Vagina (tissue), 2 donors: ENCODE measurements at regions of chr16 and their contacts with region 1.

Region 1: DNA sequence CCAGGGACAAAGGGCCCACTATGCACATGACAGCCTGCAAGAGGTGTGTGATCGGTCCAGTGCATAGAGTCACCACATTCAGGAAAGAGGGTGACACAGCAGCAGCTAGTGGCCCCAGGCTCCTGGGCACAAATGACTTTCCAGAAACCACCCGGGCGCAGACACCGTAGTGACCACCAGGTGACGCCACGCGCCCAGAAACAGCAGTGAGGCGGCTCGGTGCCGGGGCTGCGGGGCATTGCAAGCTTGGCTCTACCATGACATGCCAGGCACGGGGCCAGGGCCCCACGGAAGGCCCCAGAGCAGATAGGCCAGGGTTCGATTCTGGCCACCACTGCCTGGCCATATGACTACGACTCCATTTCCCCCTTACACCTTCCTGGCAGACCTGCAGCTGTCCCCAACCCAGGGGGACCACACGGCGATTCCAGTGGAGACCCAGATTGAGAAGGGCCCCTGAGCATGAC is 6.7 kb downstream of the RHBDF1 start:
- DNase-seq: no peak
- H3K4me3 ChIP-seq: no peak overlapping the region
- H3K27ac ChIP-seq: peak overlapping the region; percentile 25
- H3K4me1 ChIP-seq: peaks cover 55% of the 10 kb centered on the region
- H3K27me3 ChIP-seq: no peaks in the 10 kb centered on the region
- CTCF ChIP-seq: peak; percentile 92 to 96 (median 96)
- POLR2A ChIP-seq: no peak

Region 2: DNA sequence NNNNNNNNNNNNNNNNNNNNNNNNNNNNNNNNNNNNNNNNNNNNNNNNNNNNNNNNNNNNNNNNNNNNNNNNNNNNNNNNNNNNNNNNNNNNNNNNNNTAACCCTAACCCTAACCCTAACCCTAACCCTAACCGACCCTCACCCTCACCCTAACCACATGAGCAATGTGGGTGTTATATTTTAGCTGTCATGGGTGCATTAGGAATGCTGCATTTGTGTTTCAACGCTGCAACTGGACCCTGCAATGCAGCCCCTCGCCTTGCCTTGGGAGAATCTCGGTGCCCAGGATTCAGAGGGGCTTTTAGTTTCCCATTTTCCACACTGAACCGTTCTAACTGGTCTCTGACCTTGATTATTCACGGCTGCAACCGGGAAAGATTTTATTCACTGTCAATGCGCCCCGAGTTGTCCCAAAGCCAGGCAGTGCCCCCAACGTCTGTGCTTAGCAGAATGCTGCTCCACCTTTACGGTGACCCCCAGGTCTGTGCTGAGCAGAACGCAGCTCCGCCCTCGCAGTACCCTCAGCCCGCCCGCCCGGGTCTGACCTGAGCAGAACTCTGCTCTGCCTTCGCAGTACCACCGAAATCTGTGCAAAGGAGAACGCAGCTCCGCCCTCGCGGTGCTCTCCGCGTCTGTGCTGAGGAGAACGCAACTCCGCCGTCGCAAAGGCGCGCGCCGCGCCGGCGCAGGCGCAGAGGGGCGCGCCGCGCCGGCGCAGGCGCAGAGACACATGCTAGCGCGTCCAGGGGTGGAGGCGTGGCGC is 55.6 kb before region 1 on chr16:
- intact Hi-C with region 1: no loop called
- DNase-seq: peak in 1 of 2 donors; percentile 85
- H3K4me3 ChIP-seq: no peak overlapping the region
- H3K27ac ChIP-seq: no peak overlapping the region
- H3K4me1 ChIP-seq: no peaks in the 10 kb centered on the region
- H3K27me3 ChIP-seq: no peaks in the 10 kb centered on the region
- CTCF ChIP-seq: no peak
- POLR2A ChIP-seq: no peak

Region 3: GRCh38 chr16:96935-97381 is 31.3 kb after region 1 on chr16:
- intact Hi-C with region 1: loop called (anchors 2 kb)
- DNase-seq: no peak
- H3K4me3 ChIP-seq: no peak overlapping the region
- H3K27ac ChIP-seq: no peak overlapping the region
- H3K4me1 ChIP-seq: peaks cover 21% of the 10 kb centered on the region
- H3K27me3 ChIP-seq: no peaks in the 10 kb centered on the region
- CTCF ChIP-seq: peak; percentile 94 to 99 (median 99)
- POLR2A ChIP-seq: no peak

Region 4: DNA sequence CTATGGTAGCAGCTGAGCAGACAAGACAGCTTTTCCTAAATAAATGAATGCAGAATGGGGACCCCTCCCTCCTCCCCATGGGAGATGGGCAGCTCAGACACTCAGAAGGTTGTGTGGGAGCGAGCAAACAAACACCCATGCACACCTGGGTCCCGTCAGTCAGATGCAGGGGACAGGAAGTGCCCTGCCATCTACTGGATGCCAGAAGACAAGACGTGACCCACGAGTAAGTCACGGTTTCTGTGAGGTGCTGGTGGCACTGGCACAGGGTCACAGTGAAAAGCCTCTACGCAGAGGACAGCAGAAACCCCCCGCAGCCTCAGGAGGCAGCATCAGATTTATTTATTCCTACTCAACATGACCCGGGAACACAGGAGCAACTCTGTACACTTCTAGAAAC is 123.0 kb after region 1 on chr16:
- intact Hi-C with region 1: no loop called
- DNase-seq: no peak
- H3K4me3 ChIP-seq: no peak overlapping the region
- H3K27ac ChIP-seq: no peak overlapping the region
- H3K4me1 ChIP-seq: no peaks in the 10 kb centered on the region
- H3K27me3 ChIP-seq: no peaks in the 10 kb centered on the region
- CTCF ChIP-seq: no peak
- POLR2A ChIP-seq: no peak

Region 5: GRCh38 chr16:200388-200787 is 134.7 kb after region 1 on chr16:
- intact Hi-C with region 1: no loop called
- DNase-seq: no peak
- H3K4me3 ChIP-seq: no peak overlapping the region
- H3K27ac ChIP-seq: no peak overlapping the region
- H3K4me1 ChIP-seq: no peaks in the 10 kb centered on the region
- H3K27me3 ChIP-seq: no peaks in the 10 kb centered on the region
- CTCF ChIP-seq: no peak
- POLR2A ChIP-seq: no peak